Activated CD4-positive, alpha-beta T cell treated with anti-CD3 and anti-CD28 coated beads for 36 hours (primary cell): ENCODE measurements at regions of chr3 and their contacts with region 1.

Region 1: GRCh38 chr3:13419505-13420044 is 547 bp downstream of the NUP210 start:
- DNase-seq: peak; percentile 79
- ATAC-seq: peak; percentile 30
- H3K4me3 Mint-ChIP-seq: peak overlapping the region; percentile 77
- H3K27ac Mint-ChIP-seq: peak overlapping the region; percentile 95
- H3K4me1 Mint-ChIP-seq: peaks cover 58% of the 10 kb centered on the region
- H3K27me3 Mint-ChIP-seq: no peaks in the 10 kb centered on the region

Region 2: DNA sequence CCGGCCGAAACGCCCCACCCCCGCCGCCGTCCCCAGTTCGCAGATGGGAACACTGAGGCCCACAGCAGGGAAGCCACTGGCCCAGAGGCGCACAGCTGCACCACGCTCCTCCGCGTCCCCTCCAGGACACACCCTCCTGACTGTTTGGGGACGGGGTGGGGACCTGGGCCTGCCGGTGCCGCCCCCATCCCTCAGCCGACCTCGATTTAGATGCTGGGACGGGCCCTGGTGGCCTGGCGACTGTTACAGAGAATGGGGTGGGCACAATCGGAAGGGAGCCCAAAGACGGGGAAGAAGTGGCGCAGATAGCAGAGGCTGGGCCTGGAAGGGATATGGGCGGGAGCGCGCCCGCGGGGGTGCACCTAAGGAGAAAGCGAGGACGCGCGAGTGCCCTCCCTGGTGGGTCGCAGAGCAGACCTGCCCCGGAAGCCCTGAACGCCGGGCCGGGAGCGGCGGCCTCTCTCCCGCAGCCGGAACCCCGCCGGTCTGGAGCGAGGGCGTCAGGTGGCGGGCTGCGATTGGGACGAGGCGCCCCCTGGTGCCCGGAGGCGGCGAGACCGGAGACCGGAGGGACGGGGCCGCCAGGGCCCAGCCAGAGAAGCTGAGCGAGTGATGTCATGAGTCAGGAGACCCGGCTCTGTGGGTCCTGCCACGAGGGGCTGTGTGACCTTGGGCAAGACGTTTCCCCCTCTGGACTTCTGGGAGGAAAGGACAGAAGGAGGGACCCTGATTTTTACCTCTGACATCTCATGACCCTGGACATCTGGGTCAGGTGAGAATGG is 424.8 kb before region 1 on chr3:
- CTCF ChIA-PET with region 1: no interaction called
- POLR2A ChIA-PET with region 1: no interaction called
- intact Hi-C with region 1: loop called in 1 of 2 experiments (anchors 5 kb)
- DNase-seq: peak; percentile 93
- ATAC-seq: peak; percentile 91
- H3K4me3 Mint-ChIP-seq: peak overlapping the region; percentile 90
- H3K27ac Mint-ChIP-seq: peak overlapping the region; percentile 81
- H3K4me1 Mint-ChIP-seq: peaks cover 56% of the 10 kb centered on the region
- H3K27me3 Mint-ChIP-seq: no peaks in the 10 kb centered on the region

Region 3: DNA sequence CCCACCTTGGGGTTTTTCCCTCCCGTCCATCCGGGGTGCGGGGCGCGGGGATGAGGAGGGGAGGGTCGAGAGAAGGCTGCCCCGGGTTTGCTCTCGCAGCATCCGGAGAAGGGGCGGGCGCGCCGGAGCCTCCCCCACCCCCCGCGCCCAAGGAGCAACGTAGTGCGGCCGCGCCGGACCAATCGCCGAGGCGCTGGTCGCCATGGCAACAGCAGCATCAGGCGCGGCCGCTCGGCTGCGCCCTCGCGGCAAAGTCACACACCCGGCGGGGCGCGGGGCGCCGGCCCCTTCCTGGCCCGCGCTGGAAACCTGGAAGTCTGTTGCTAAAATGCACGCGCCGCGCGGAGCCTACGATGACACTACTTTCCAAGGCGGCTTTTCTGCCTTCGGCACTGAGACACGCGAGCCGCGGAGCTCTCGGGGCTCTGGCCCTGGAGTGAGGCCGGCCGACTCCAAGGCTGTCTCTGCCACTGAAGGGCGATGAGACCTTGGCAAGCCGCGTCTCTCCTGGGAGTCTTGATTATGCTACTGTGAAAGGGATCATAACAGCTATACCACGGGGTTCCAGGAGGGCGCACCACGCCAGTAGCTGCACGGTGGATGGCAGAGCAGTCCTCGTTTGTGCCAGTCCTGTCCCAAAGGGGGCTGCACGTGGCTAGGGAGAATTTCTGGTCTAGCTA is 346.1 kb before region 1 on chr3 and contains the start of gene IQSEC1:
- CTCF ChIA-PET with region 1: no interaction called
- POLR2A ChIA-PET with region 1: no interaction called
- intact Hi-C with region 1: loop called in 1 of 2 experiments (anchors 1 kb)
- DNase-seq: peak; percentile 89
- ATAC-seq: peak; percentile 68
- H3K4me3 Mint-ChIP-seq: peak within 1 kb of the TSS; percentile 80
- H3K27ac Mint-ChIP-seq: peak within 1 kb of the TSS; percentile 51
- H3K4me1 Mint-ChIP-seq: peaks cover 34% of the 10 kb centered on the region
- H3K27me3 Mint-ChIP-seq: peaks cover 21% of the 10 kb centered on the region
- total RNA-seq, gene IQSEC1: 36.8 to 40.4 TPM

Region 4: DNA sequence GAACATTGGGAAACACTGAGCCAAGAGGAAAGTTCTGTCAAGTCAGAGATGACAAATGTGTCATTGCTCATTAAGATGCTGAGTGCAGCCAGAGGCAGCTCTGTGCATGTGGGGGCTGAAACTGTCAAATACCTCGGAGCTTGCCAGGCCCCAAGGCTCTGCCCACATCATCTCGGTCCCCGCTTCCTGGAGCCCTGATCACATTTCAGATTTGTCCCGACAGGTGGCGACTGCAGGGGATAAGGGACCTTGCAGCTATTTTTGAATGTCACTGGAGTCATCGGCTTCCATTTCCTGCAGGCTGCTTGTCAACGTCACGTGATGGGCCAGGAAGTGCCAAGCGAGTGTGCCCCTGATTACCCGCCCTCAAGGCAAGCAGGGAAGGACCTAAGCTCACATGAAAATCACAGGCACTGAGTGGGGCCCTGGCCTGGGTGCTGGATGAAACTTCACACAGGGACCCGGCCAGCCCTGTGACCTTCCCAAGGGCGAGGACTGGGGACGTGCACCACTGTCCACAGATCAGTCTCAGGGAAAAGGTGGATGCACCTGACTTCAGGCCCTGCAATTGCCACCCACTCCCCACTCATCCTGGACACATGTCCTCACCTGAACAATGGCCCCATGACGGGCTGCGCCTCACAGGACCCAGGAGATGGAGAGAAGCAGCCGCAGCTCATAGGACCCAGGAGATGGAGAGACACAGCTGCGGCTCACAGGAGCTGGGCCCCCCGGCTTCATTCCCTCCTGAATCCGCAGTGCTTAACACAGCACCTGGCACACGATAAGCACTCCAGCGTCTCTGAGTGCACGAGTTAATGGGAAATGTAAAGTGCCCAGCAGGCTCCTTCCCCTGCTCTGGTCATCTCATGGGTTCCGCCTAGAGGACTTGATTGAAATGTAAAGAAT is 72.8 kb before region 1 on chr3:
- CTCF ChIA-PET with region 1: interaction called, 6 read pairs
- POLR2A ChIA-PET with region 1: no interaction called
- intact Hi-C with region 1: loop called (anchors 1 to 5 kb)
- DNase-seq: peak; percentile 89
- ATAC-seq: peak; percentile 90
- H3K4me3 Mint-ChIP-seq: no peak overlapping the region
- H3K27ac Mint-ChIP-seq: peak overlapping the region; percentile 90
- H3K4me1 Mint-ChIP-seq: peaks cover 55% of the 10 kb centered on the region
- H3K27me3 Mint-ChIP-seq: no peaks in the 10 kb centered on the region

Region 5: DNA sequence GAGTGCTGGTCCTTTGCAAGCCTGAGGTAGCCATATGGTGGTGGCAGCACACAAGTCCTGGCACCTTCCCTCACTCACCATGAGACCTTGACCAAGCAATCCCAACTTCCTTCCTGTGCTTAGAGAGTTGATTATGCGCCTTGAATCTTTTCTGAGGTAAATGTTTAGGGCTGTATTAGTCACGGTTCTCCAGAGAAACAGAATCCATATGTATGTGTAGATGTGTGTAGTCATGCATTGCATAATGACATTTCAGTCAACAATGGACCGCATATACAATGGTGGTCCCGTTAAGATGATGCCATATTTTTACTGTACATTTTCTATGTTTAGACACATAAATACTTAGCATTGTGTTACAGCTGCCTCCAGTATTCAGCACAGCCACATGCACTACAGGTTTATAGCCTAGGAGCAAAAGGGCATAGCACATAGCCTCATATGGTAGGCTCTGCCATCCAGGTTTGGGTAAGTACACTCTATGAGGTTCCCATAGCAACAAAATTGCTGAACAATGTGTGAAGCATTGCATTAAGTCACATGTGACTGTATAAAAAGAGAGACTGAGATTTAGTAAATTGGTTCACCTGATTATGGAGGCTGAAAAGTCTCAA is 20.7 kb after region 1 on chr3:
- CTCF ChIA-PET with region 1: no interaction called
- POLR2A ChIA-PET with region 1: no interaction called
- intact Hi-C with region 1: no loop called
- DNase-seq: no peak
- ATAC-seq: no peak
- H3K4me3 Mint-ChIP-seq: no peak overlapping the region
- H3K27ac Mint-ChIP-seq: no peak overlapping the region
- H3K4me1 Mint-ChIP-seq: no peaks in the 10 kb centered on the region
- H3K27me3 Mint-ChIP-seq: no peaks in the 10 kb centered on the region

Region 6: DNA sequence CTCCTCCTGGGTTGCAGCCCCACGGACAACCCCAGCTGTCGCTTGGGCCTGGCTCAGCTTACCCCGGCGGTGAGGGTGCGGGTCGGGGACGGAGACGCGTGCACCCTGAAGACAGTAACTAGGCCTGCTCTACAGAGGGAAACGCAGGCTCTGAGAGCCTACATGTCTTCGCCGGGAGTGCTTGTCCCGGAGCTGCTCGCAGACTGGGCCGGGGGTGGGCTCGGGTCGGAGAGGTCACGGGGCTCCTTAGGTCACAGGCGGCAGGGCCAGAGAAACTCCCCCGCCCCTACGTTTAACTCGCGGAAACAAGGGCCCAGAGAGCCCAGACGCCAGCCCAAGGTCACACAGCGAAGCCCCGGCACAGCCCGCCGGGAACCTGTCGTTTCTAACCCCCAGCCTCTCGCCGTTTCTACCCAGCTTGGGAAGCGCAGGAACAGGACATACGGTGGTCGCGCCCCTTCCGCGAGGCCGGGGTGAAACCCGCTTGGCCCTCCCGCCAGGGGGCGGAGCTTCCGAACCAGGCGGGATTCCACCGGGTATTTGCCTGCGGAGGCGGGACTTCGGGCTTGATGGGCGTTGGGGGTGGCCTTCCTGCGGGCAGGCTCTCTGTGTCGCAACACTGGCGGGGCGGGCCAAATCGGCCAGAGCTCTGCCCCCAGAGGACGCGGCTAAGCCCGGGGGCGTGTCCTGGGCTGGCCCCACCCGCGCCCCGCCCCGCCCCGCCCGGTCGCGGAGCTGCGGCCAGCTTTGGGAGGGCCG is 60.2 kb after region 1 on chr3 and contains the start of gene HDAC11:
- CTCF ChIA-PET with region 1: interaction called, 3 read pairs
- POLR2A ChIA-PET with region 1: interaction called, 5 read pairs
- intact Hi-C with region 1: loop called (anchors 1 to 2 kb)
- DNase-seq: peak; percentile 99
- ATAC-seq: peak; percentile 96
- H3K4me3 Mint-ChIP-seq: peak within 1 kb of the TSS; percentile 89
- H3K27ac Mint-ChIP-seq: peak within 1 kb of the TSS; percentile 90
- H3K4me1 Mint-ChIP-seq: peaks cover 20% of the 10 kb centered on the region
- H3K27me3 Mint-ChIP-seq: no peaks in the 10 kb centered on the region
- total RNA-seq, gene HDAC11: 3.4 to 4.1 TPM

Region 7: DNA sequence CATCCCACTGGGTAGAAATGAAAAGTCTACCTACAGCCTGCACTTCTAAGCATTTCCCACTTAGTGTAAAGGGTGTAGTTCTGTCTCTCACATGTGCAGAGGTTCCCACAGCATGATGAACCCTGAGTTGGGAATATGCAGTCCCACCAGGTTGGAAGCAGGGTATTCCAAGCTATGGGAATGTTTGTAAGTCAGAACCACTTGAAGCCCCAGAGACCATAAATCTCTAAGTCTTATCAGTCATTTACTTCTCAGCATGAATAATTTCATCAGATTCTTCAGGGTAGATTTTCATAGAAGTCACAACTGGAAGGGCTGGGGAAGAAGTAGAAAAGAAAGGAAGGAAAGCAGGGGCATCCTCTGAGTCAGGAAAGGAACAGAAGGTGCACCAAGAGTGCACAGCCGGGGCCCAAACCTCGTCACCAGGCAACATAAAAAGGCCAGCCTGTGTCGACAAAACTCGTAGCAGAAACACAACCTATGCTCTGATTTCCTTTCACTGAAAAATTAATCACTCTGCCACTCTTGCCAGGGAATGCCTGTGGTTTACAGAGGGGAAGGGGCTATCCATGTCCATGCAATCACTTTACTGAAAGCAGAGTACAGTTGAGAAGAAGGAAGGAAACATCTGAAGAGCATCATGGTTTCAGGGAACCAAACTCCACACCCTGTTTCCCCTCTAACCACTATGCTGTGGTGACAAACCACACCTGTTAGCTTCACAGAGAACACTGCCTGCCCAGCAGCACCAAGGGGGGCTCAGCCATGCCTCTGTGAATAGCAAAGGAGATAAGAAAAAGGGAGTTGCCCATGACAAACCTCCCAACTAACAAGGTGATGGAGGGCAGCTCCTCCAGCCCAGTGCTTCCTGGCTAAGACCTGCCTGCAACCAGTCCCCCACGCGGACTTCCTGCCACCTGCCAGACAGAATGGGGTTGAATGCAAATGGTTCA is 1872.3 kb after region 1 on chr3:
- CTCF ChIA-PET with region 1: no interaction called
- POLR2A ChIA-PET with region 1: no interaction called
- intact Hi-C with region 1: no loop called
- DNase-seq: peak; percentile 77
- ATAC-seq: peak; percentile 82
- H3K4me3 Mint-ChIP-seq: no peak overlapping the region
- H3K27ac Mint-ChIP-seq: peak overlapping the region; percentile 70
- H3K4me1 Mint-ChIP-seq: peaks cover 68% of the 10 kb centered on the region
- H3K27me3 Mint-ChIP-seq: no peaks in the 10 kb centered on the region